Activated CD8-positive, alpha-beta memory T cell treated with anti-CD3 and anti-CD28 coated beads, Interleukin-2, amount 10 ng/mL, durations not matched to agents 7 days and 5 days (primary cell): ENCODE measurements at regions of chr17 and their contacts with region 1.

Region 1: GRCh38 chr17:10875979-10876555 is 38.2 kb upstream of the PIRT start:
- DNase-seq: peak; percentile 46
- ATAC-seq: no peak
- H3K4me3 Mint-ChIP-seq: no peak overlapping the region
- H3K27ac Mint-ChIP-seq: no peak overlapping the region
- H3K4me1 Mint-ChIP-seq: no peaks in the 10 kb centered on the region
- H3K27me3 Mint-ChIP-seq: no peaks in the 10 kb centered on the region

Region 2: DNA sequence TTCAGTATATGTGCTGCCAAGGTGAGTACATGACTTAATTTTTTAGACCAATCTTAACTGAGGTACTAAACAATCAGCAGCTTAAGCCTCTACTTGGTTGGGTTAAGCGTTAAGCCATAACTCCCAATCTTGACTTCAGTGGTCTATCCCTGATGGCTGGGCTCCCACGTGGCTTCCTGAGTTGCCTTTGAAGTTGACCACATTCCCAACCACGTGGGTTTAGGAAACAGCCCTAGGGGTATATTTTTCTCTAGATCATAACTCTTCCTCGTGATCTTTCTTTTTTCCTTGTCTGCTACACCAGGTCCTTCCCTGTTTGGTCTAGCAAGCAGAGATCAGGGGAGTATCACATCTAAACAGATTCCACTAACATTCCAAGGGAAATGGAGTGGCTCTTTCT is 18.1 kb before region 1 on chr17:
- CTCF ChIA-PET with region 1: no interaction called
- DNase-seq: no peak
- ATAC-seq: no peak
- H3K4me3 Mint-ChIP-seq: no peak overlapping the region
- H3K27ac Mint-ChIP-seq: no peak overlapping the region
- H3K4me1 Mint-ChIP-seq: no peaks in the 10 kb centered on the region
- H3K27me3 Mint-ChIP-seq: peaks cover 1% of the 10 kb centered on the region

Region 3: GRCh38 chr17:11144358-11145233 is 268.5 kb after region 1 on chr17:
- CTCF ChIA-PET with region 1: interaction called, 14 read pairs
- DNase-seq: no peak
- ATAC-seq: no peak
- H3K4me3 Mint-ChIP-seq: no peak overlapping the region
- H3K27ac Mint-ChIP-seq: no peak overlapping the region
- H3K4me1 Mint-ChIP-seq: no peaks in the 10 kb centered on the region
- H3K27me3 Mint-ChIP-seq: no peaks in the 10 kb centered on the region